ENCODE measurements at regions of chr10 and their contacts with region 1.

Region 1: GRCh38 chr10:7410862-7411670 is at the start of gene SFMBT2:
- DNase-seq: peak; percentile 64 to 73
- ATAC-seq: peak; percentile 59 to 74 (median 62)
- H3K4me3 ChIP-seq: peak within 1 kb of the TSS; percentile 66 to 88 (median 77)
- H3K27ac ChIP-seq: peak within 1 kb of the TSS; percentile 69 to 93 (median 88)
- H3K4me1 ChIP-seq: peaks cover 14 to 57% (median 41%) of the 10 kb centered on the region in 9 donors
- H3K27me3 ChIP-seq: peaks cover 0 to 38% (median 9%) of the 10 kb centered on the region in 7 donors
- CTCF ChIP-seq: peak in 7 of 9 donors; percentile 9 to 45 (median 16)
- total RNA-seq, gene SFMBT2: 7.3 to 14.2 (median 10.7) TPM

Region 2: GRCh38 chr10:6667679-6668270 is 743.3 kb before region 1 on chr10:
- intact Hi-C with region 1: loop called in 8 of 10 experiments (anchors 5 to 10 kb)
- DNase-seq: peak in 1 of 2 donors; percentile 13
- ATAC-seq: no peak
- H3K4me3 ChIP-seq: no peak overlapping the region
- H3K27ac ChIP-seq: no peak overlapping the region
- H3K4me1 ChIP-seq: peaks cover 0 to 13% (median 5%) of the 10 kb centered on the region in 9 donors
- H3K27me3 ChIP-seq: peaks cover 0 to 29% (median 10%) of the 10 kb centered on the region in 7 donors
- CTCF ChIP-seq: peak in 7 of 9 donors; percentile 29 to 60 (median 44)

Region 3: DNA sequence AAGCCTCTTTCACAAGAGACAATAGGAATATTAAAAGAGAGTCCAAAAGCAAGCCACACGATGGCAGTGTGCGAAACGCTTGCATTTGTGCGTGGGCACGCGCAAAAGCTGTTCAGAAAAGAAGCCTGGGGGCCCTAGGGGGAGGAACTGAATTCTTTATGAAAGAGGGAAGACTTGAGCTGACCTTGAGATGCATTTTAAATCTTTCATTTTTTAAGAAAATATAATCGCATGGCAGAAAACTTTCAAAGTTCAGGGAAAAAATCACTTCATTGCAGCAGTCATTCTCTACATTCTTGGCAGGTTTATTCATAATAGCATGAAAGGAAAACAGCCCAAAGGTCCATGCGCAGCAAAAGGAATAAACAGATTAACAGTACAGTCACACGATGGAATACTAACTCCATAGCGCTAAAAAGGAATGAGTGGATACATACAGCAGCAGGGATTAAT is 624.5 kb before region 1 on chr10:
- intact Hi-C with region 1: loop called in 4 of 10 experiments (anchors 5 to 10 kb)
- DNase-seq: no peak
- ATAC-seq: peak in 1 of 8 donors; percentile 55
- H3K4me3 ChIP-seq: no peak overlapping the region
- H3K27ac ChIP-seq: no peak overlapping the region
- H3K4me1 ChIP-seq: peaks cover 0 to 10% (median 0%) of the 10 kb centered on the region in 9 donors
- H3K27me3 ChIP-seq: peaks cover 0 to 20% (median 0%) of the 10 kb centered on the region in 7 donors
- CTCF ChIP-seq: peak in 6 of 9 donors; percentile 29 to 48 (median 42)

Region 4: GRCh38 chr10:7121154-7121810 is 289.8 kb before region 1 on chr10:
- intact Hi-C with region 1: loop called in 8 of 10 experiments (anchors 2 to 5 kb)
- DNase-seq: peak; percentile 49 to 56
- ATAC-seq: peak in 7 of 8 donors; percentile 49 to 78 (median 69)
- H3K4me3 ChIP-seq: no peak overlapping the region
- H3K27ac ChIP-seq: no peak overlapping the region
- H3K4me1 ChIP-seq: no peaks in the 10 kb centered on the region
- H3K27me3 ChIP-seq: peaks cover 0 to 21% (median 0%) of the 10 kb centered on the region in 7 donors
- CTCF ChIP-seq: peak; percentile 51 to 84 (median 72)

Region 5: DNA sequence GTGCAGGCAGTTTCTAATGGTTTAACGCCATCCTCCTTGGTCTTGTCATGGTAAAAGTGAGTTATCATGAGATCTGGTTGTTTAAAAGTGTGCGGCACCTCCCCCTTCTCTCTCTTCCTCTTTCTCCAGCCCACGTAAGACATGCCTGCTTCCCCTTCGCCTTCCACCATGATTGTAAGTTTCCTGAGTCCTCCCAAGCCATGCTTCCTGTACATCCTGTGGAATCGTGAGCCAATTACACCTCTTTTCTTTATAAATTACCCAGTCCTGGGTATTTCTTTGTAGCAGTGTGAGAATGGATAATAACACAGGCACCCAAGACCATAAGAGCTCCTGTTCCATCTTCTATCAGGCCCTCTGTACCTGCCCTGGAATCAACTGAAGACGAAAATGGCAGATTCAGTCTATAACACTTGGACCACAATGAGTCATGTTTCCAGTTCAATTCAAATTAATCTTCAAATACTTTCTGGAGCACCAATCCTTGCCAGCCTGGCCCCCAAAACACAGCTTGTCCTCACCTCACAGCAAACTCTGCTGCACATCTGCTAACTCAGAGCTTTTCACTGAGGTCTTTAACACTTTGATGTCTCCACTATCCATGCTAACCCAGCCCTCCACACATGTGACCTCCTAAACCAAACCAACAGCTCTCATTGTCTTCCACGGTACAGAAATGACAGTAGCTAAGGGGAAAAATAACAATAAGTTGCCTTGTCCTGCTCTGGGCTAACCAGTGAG is 73.5 kb before region 1 on chr10:
- intact Hi-C with region 1: loop called in 7 of 10 experiments (anchors 2 to 10 kb)
- DNase-seq: no peak
- ATAC-seq: peak in 2 of 8 donors; percentile 18 to 38
- H3K4me3 ChIP-seq: no peak overlapping the region
- H3K27ac ChIP-seq: peak overlapping the region in 6 of 10 donors; percentile 3 to 57 (median 32)
- H3K4me1 ChIP-seq: peaks cover 4 to 71% (median 47%) of the 10 kb centered on the region in 9 donors
- H3K27me3 ChIP-seq: no peaks in the 10 kb centered on the region
- CTCF ChIP-seq: no peak

Region 6: GRCh38 chr10:7484456-7485243 is 73.6 kb after region 1 on chr10:
- intact Hi-C with region 1: no loop called
- DNase-seq: no peak
- ATAC-seq: peak in 4 of 8 donors; percentile 33 to 65 (median 37)
- H3K4me3 ChIP-seq: peak overlapping the region in 4 of 10 donors; percentile 19 to 33 (median 29)
- H3K27ac ChIP-seq: peak overlapping the region in 5 of 10 donors; percentile 30 to 88 (median 38)
- H3K4me1 ChIP-seq: peaks cover 2 to 82% (median 26%) of the 10 kb centered on the region in 9 donors
- H3K27me3 ChIP-seq: peaks cover 0 to 11% (median 0%) of the 10 kb centered on the region in 7 donors
- CTCF ChIP-seq: no peak

Measured in heart right ventricle (tissue), 16 donors.